Natural killer cell (primary cell): ENCODE measurements at regions of chr2 and their contacts with region 1.

Region 1: DNA sequence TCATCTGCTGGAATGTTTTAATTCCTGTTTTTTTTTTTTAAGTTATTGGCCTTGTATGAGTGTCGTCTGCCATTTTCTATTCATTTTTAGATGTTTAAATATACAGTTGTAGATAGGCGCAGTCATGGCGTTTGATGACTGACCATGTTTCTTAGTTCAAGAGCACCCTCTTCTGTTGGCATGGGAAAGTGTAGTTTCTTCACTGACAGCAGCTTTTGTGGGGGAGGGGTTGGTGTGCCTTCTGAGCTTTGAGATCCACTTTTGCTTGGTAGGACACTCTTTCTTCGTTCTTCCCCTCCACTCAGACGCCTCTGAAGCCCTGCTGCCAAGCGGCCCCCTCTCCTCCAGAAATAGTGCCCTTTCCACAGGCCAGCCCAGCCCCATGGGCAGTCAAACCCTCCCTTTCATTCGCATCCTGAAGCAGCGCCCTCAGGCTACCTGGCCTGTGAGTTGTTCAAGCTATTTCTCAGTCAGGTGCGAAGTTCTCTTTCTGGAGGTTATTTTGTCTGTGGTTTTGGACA is 492.0 kb downstream of the TNS1 start:
- DNase-seq: peak in 1 of 2 donors; percentile 68
- ATAC-seq: peak; percentile 61 to 84 (median 68)
- H3K4me3 ChIP-seq: no peak overlapping the region
- H3K4me3 Mint-ChIP-seq: no peak overlapping the region
- H3K27ac ChIP-seq: no peak overlapping the region
- H3K27ac Mint-ChIP-seq: no peak overlapping the region
- H3K4me1 ChIP-seq: no peaks in the 10 kb centered on the region
- H3K4me1 Mint-ChIP-seq: peaks cover 0 to 6% of the 10 kb centered on the region in 2 donors
- H3K27me3 ChIP-seq: no peaks in the 10 kb centered on the region
- H3K27me3 Mint-ChIP-seq: peaks cover 17 to 18% of the 10 kb centered on the region in 2 donors
- CTCF ChIP-seq: peak; percentile 47

Region 2: DNA sequence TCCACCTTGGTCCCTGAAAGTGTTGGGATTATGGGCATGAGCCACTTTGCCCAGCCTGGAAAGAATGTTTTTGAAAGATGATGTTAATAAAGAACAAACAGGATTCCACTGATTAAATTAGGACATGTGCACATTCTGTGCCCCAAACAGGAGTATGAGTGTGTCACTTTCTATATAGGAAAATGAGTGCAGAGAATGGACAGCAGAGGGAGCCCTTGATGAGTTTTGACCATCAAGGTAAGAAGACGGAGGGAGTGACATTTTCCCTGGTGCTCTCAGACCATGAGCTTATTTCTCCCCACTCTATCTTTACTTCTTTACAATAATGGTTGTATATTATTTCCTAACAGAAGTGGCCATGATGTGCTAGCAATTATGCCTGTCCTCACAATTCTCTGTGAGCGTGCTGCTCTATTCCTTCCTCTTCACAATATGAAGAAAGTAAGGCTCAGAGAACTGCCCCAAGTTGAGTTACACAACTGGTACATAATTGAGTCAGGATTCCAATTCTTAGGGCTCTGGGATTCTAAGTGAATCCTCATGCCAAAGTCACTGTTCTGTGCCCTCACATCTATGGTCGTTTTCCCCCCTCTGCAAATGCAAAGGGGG is 991.6 kb before region 1 on chr2:
- intact Hi-C with region 1: loop called (anchors 5 kb)
- DNase-seq: peak; percentile 29 to 77
- ATAC-seq: peak; percentile 72 to 84 (median 83)
- H3K4me3 ChIP-seq: no peak overlapping the region
- H3K4me3 Mint-ChIP-seq: no peak overlapping the region
- H3K27ac ChIP-seq: no peak overlapping the region
- H3K27ac Mint-ChIP-seq: no peak overlapping the region
- H3K4me1 ChIP-seq: no peaks in the 10 kb centered on the region
- H3K4me1 Mint-ChIP-seq: peaks cover 6 to 7% of the 10 kb centered on the region in 2 donors
- H3K27me3 ChIP-seq: no peaks in the 10 kb centered on the region
- H3K27me3 Mint-ChIP-seq: no peaks in the 10 kb centered on the region
- CTCF ChIP-seq: peak; percentile 89

Region 3: GRCh38 chr2:216681683-216682082 is 829.1 kb before region 1 on chr2:
- intact Hi-C with region 1: loop called (anchors 1 kb)
- DNase-seq: no peak
- ATAC-seq: no peak
- H3K4me3 ChIP-seq: no peak overlapping the region
- H3K4me3 Mint-ChIP-seq: no peak overlapping the region
- H3K27ac ChIP-seq: no peak overlapping the region
- H3K27ac Mint-ChIP-seq: no peak overlapping the region
- H3K4me1 ChIP-seq: no peaks in the 10 kb centered on the region
- H3K4me1 Mint-ChIP-seq: peaks cover 6% of the 10 kb centered on the region in 2 donors
- H3K27me3 ChIP-seq: no peaks in the 10 kb centered on the region
- H3K27me3 Mint-ChIP-seq: peaks cover 32 to 40% of the 10 kb centered on the region in 2 donors
- CTCF ChIP-seq: no peak

Region 4: GRCh38 chr2:216698895-216699294 is 811.9 kb before region 1 on chr2:
- intact Hi-C with region 1: loop called (anchors 5 kb)
- DNase-seq: peak in 1 of 2 donors; percentile 58
- ATAC-seq: peak; percentile 43 to 80 (median 44)
- H3K4me3 ChIP-seq: no peak overlapping the region
- H3K4me3 Mint-ChIP-seq: no peak overlapping the region
- H3K27ac ChIP-seq: no peak overlapping the region
- H3K27ac Mint-ChIP-seq: no peak overlapping the region
- H3K4me1 ChIP-seq: peaks cover 9% of the 10 kb centered on the region
- H3K4me1 Mint-ChIP-seq: peaks cover 5 to 11% of the 10 kb centered on the region in 2 donors
- H3K27me3 ChIP-seq: peaks cover 25% of the 10 kb centered on the region
- H3K27me3 Mint-ChIP-seq: peaks cover 10 to 40% of the 10 kb centered on the region in 2 donors
- CTCF ChIP-seq: peak; percentile 51

Region 5: GRCh38 chr2:217356781-217357180 is 154.1 kb before region 1 on chr2:
- intact Hi-C with region 1: no loop called
- DNase-seq: no peak
- ATAC-seq: no peak
- H3K4me3 ChIP-seq: no peak overlapping the region
- H3K4me3 Mint-ChIP-seq: no peak overlapping the region
- H3K27ac ChIP-seq: no peak overlapping the region
- H3K27ac Mint-ChIP-seq: no peak overlapping the region
- H3K4me1 ChIP-seq: no peaks in the 10 kb centered on the region
- H3K4me1 Mint-ChIP-seq: no peaks in the 10 kb centered on the region
- H3K27me3 ChIP-seq: no peaks in the 10 kb centered on the region
- H3K27me3 Mint-ChIP-seq: peaks cover 0 to 15% of the 10 kb centered on the region in 2 donors
- CTCF ChIP-seq: no peak